ENCODE measurements at regions of chr13 and their contacts with region 1.

Region 1: GRCh38 chr13:112641456-112642089 is 48.3 kb upstream of the ATP11A start:
- DNase-seq: no peak
- H3K4me3 ChIP-seq: no peak overlapping the region
- H3K27ac ChIP-seq: no peak overlapping the region
- H3K4me1 ChIP-seq: peaks cover 0 to 12% (median 7%) of the 10 kb centered on the region in 4 experiments; a peak in 6 of 7 replicates
- H3K27me3 ChIP-seq: peaks cover 0 to 6% (median 0%) of the 10 kb centered on the region in 4 experiments; a peak in 3 of 7 replicates
- CTCF ChIP-seq: no peak
- EP300 ChIP-seq: no peak
- POLR2A ChIP-seq: no peak
- RAD21 ChIP-seq: no peak

Region 2: GRCh38 chr13:112545856-112546255 is 95.7 kb before region 1 on chr13:
- CTCF ChIA-PET with region 1: no interaction called
- POLR2A ChIA-PET with region 1: no interaction called
- DNase-seq: no peak
- H3K4me3 ChIP-seq: no peak overlapping the region
- H3K27ac ChIP-seq: no peak overlapping the region
- H3K4me1 ChIP-seq: no peaks in the 10 kb centered on the region
- H3K27me3 ChIP-seq: no peaks in the 10 kb centered on the region; a peak in 1 of 7 replicates
- CTCF ChIP-seq: no peak
- EP300 ChIP-seq: no peak
- POLR2A ChIP-seq: no peak
- RAD21 ChIP-seq: no peak

Region 3: DNA sequence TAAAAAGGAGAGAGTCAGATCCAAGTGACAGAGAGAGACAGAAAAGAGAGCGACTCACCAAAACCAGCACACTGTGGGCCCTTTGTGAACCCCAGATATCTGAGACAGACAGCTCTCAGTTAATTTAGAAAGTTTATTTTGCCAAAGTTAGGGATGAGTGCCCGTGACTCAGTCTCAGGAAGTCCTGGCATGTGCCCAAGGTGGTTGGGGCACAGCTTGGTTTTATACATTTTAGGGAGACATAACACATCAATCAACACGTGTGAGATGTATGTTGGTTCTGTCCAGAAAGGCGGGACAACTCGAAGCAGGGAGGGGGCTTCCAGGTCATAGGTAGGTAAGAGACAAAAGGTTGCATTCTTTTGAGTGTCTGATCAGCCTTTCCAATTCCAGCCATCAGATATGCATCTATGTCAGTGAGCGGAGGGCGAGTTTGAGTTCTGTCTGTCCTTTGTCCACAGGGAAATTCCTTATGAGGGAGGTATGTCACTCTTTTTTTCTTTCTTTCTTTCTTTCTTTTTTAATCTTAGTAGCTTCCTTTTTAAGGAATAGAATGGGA is 11.0 kb after region 1 on chr13:
- CTCF ChIA-PET with region 1: interaction called, 25 read pairs
- POLR2A ChIA-PET with region 1: no interaction called
- DNase-seq: no peak
- H3K4me3 ChIP-seq: no peak overlapping the region
- H3K27ac ChIP-seq: no peak overlapping the region
- H3K4me1 ChIP-seq: peaks cover 0 to 3% (median 0%) of the 10 kb centered on the region in 4 experiments; a peak in 1 of 7 replicates
- H3K27me3 ChIP-seq: no peaks in the 10 kb centered on the region
- CTCF ChIP-seq: no peak
- EP300 ChIP-seq: no peak
- POLR2A ChIP-seq: no peak
- RAD21 ChIP-seq: no peak

Region 4: DNA sequence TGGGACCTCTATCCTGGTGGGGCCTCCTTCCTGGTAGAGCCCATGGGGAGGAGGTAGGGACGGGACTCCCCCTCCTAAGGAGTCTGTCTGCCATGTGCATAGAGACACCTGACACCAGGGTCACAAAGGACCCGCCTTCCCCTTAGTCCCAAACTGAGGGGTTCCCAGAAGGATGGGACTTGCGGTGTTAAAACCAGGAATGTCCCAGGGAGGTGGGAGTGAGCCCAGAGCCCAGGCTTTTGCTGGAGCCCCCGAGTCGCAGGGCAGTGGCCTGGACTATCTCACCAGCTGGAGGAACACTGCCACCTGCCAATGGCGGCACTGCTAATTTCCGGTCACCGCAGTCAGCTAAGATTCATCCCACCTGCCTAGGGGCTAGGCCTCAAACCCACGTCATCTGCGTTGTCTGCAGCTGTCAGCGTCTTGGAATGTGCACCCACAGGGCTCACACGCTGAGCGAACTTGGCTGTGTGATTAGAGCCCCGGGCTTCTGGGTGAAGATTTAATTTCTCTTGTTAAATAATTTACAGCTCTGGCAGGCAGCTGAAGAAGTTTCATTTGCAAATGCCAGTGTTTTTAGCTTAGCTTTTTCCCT is 16.4 kb after region 1 on chr13:
- CTCF ChIA-PET with region 1: interaction called, 25 read pairs
- POLR2A ChIA-PET with region 1: no interaction called
- DNase-seq: no peak
- H3K4me3 ChIP-seq: no peak overlapping the region
- H3K27ac ChIP-seq: no peak overlapping the region
- H3K4me1 ChIP-seq: peaks cover 0 to 4% (median 2%) of the 10 kb centered on the region in 4 experiments; a peak in 1 of 7 replicates
- H3K27me3 ChIP-seq: no peaks in the 10 kb centered on the region
- CTCF ChIP-seq: no peak
- EP300 ChIP-seq: no peak
- POLR2A ChIP-seq: no peak
- RAD21 ChIP-seq: no peak